Activated CD4-positive, alpha-beta memory T cell treated with anti-CD3 and anti-CD28 coated beads, Interleukin-2, amount 10 ng/mL, durations not matched to agents 7 days and 5 days (primary cell): ENCODE measurements at regions of chr10 and their contacts with region 1.

Region 1: DNA sequence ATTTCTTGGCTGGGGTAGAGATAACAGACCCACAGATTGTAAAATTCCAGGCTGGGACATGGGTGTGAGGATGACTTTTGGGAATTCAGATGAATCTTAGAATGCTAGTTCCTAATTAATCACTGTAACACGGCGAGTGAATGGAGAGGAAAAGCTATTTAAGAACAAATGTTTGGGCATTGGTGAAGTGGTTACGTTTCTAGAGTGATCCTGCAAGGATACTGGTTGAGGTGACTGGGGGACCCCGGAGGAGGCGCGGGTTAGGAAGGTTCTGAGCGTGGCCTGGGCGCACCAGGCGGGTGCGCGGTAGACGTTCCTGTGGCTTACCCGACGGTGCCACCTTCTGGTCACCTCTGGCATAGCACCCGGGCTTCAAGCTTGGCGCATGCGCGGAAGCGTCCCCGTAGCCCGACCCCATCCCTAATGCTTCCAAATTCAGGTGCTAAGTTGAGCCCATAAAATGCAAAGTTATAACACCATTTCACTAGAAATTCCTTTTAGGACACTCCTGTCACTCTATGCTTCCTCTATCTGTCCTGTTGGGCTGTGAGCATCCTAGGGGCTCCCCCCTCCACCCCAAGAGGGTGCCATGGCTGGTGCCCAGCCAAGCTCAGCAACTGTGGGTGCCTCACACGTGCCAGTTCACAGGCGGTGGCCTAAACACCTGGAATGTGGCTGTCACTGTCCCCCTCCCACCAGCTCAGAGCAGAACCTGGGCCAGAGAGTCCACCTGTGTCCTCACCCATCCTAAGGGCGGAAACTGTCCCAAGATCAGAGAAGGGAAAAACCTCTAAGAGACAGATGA is 104.5 kb downstream of the PTPRE start:
- DNase-seq: peak; percentile 87
- H3K4me3 Mint-ChIP-seq: no peak overlapping the region
- H3K27ac Mint-ChIP-seq: no peak overlapping the region
- H3K4me1 Mint-ChIP-seq: peaks cover 12% of the 10 kb centered on the region
- H3K27me3 Mint-ChIP-seq: peaks cover 28% of the 10 kb centered on the region

Region 2: GRCh38 chr10:127570036-127570435 is 441.3 kb before region 1 on chr10:
- CTCF ChIA-PET with region 1: no interaction called
- POLR2A ChIA-PET with region 1: no interaction called
- DNase-seq: no peak
- H3K4me3 Mint-ChIP-seq: no peak overlapping the region
- H3K27ac Mint-ChIP-seq: no peak overlapping the region
- H3K4me1 Mint-ChIP-seq: no peaks in the 10 kb centered on the region
- H3K27me3 Mint-ChIP-seq: no peaks in the 10 kb centered on the region

Region 3: DNA sequence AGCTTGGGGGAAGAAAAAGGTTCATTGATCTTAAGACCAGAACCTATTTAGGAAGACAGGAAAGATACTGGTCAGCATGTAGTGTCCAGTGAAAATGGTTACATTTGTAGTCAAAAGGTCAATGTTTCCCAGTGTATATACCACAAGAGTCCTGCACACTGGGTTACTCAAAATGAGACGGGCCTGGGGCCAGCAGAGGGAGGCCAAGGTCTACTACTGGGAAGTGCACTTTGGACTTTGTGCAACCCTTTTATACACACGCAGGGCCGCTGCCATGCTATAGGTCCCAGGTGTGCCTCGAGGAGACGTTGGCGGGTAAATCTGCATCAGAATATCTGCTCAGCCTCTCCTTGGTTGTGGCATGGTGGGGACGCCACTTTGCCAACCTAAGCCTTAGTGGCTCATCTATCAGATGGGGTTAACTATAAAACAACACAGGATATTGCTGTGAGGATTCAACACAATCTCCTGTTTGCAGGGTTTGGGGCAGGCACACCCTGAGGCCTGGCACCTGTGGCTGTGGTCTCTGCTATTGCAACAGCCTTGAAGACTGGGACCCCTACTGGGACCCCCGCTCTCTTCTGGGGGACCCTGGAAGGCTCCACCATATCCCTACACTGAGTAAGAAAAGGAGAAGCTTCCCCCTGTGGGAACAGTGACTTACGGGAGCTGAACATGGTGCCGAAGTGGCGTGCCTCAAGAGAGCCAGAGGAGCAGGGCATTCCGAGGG is 138.3 kb before region 1 on chr10:
- CTCF ChIA-PET with region 1: interaction called, 11 read pairs
- POLR2A ChIA-PET with region 1: no interaction called
- DNase-seq: no peak
- H3K4me3 Mint-ChIP-seq: no peak overlapping the region
- H3K27ac Mint-ChIP-seq: no peak overlapping the region
- H3K4me1 Mint-ChIP-seq: peaks cover 25% of the 10 kb centered on the region
- H3K27me3 Mint-ChIP-seq: peaks cover 26% of the 10 kb centered on the region

Region 4: DNA sequence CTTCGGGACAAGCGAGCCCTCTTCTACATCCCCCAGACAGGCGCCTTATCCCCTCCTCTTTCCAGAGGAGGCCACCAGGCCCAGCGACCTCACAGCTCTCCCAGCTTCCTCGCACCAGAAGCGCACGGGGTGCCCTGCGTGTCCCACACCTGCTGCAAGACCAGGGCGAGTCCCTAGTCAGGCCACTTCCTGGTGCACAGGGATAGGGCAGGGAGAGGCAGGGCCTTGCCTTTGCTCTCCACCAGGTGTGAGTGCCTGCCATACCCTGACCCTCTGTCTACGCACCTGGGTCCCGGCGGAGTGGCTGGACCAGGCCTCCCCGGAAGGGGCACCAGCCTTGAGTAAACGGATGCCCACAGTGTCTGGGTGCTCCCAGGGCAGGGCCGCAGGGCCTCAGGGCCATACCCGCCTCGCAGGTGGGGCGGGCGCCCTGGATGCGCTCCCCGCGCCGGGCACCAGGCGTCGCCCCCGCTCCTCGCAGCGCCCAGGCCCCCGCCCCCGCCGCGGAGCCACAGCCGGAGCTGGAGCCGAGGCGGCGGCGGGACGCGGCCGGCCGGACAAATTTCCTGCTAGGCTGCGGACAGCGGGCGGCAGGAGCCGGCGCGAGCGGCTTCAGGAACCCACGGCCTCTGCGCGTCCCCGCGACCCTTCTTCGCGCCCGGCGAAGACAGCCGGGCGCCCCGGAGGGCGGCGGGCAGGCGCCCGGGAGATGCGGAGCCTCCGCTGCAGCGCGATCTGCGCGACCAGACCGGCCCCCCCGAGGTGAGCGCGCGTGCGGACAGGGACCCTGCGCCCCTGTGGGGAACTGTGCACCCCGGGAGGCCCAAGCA is 104.6 kb before region 1 on chr10 and contains the start of gene PTPRE:
- CTCF ChIA-PET with region 1: interaction called, 76 read pairs
- POLR2A ChIA-PET with region 1: no interaction called
- DNase-seq: peak; percentile 71
- H3K4me3 Mint-ChIP-seq: peak within 1 kb of the TSS; percentile 14
- H3K27ac Mint-ChIP-seq: no peak within 1 kb of the TSS
- H3K4me1 Mint-ChIP-seq: peaks cover 9% of the 10 kb centered on the region
- H3K27me3 Mint-ChIP-seq: peaks cover 41% of the 10 kb centered on the region
- total RNA-seq, gene PTPRE: 29.2 to 30.6 TPM

Region 5: DNA sequence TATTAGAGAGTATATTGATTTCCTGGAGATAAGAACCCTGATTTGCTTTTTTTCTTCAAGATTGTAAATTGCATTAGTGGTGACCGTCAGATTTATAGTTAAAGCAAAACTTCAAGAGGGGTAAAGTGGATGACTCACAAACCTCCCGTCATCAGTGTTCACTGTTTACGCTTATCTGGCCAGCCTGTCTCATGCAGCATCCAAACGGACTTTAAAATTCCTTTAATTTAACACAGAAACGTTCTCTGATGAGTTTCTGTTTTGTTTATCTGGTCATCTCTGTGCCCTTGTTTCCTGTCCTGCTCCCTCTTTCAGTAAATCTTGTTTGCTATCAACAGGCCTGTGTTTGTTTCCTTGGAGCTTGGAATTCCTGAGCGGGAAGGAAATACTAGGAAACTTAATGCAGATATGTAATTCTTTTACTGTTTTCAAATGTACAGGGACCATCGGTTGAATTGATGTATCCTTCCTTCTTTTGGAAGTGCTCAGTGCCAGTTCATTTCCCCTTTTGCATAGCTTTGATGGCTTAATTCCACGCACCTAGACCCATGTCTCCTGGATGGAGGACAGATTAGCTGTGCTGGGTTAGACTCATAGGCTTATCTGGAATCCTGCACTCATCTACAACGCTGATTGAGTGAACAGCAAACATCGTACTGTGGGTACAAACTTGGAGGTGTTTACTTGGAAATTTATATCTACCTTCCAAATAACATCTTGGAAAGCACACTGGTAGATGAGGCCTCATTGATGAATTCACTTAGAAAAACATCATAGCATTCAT is 83.2 kb before region 1 on chr10:
- CTCF ChIA-PET with region 1: interaction called, 10 read pairs
- POLR2A ChIA-PET with region 1: no interaction called
- DNase-seq: no peak
- H3K4me3 Mint-ChIP-seq: no peak overlapping the region
- H3K27ac Mint-ChIP-seq: no peak overlapping the region
- H3K4me1 Mint-ChIP-seq: peaks cover 6% of the 10 kb centered on the region
- H3K27me3 Mint-ChIP-seq: peaks cover 2% of the 10 kb centered on the region

Region 6: DNA sequence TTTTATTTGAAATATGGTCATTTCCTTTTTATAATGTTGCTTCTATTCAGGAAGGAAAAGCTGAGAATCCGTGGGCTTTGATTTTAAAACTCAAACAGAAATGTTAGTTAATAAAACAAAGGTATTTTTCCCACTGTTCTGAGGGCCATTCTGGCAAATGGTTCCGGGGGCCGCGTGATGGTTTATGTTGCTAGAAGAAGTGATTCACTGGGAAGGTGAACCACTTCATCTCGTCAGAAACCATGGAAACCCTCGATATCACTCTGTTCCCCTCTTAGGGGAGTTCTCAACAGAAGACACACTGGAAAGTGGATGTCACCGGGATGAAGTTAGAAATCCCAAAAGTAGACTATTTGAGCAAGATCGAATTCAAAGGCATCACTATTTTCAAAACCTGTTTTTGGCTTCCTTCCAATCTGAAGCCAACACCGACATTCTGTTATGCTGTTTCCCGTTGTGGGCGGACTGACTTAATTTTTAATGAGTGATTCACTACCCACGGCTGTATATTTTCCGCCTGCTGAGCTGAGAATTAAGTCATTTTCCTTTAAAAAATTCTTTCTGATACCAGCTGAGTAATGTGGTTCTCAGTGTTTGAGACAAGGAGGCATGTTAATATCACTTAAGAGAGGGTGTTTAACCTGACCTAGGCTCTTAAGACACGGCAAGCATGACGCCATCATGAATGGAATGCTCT is 20.4 kb before region 1 on chr10:
- CTCF ChIA-PET with region 1: interaction called, 19 read pairs
- POLR2A ChIA-PET with region 1: interaction called, 4 read pairs
- DNase-seq: peak; percentile 49
- H3K4me3 Mint-ChIP-seq: peak overlapping the region; percentile 37
- H3K27ac Mint-ChIP-seq: peak overlapping the region; percentile 71
- H3K4me1 Mint-ChIP-seq: peaks cover 46% of the 10 kb centered on the region
- H3K27me3 Mint-ChIP-seq: peaks cover 3% of the 10 kb centered on the region

Region 7: DNA sequence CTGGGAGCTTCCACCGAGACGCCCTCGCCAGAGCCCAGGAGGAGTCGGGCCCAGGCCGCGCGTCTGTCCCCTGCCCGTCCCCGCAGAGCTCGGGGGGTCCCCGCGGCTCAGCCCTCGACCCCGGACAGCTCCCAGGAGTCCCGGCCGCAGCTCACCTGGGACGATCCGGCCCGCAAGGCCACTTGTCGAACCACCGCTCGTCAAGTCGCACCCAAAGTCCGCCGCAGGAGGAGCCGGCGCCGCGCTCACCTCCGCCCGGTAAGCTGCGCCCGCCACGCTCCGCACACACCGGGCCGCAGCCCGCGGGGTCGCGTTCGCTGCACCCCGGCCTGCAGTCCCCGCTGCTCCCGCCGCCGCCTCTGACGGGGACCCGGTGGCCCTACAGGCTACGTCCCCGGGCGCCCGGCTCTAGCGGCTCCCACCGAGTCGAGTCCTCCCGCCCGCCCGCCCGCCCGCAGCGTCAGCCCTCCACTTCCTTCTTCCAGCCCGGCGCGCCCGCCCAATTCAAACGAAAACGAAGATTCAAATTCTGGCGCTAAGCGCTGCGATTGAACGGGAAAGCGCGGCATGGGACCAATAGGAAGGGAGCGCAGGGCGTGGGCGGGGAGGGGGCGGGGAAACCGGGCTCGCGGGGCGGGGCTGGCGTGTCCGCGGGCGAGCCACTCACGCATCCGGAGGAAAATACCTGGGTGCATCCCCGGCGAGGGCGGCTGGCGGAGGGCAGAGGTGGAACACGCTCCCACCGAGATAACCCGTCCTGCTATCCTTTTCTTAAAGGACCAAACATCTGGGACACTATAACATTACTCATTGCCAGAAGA is 114.8 kb after region 1 on chr10 and contains the start of gene MKI67:
- CTCF ChIA-PET with region 1: no interaction called
- POLR2A ChIA-PET with region 1: no interaction called
- DNase-seq: peak; percentile 94
- H3K4me3 Mint-ChIP-seq: peak within 1 kb of the TSS; percentile 99
- H3K27ac Mint-ChIP-seq: peak within 1 kb of the TSS; percentile 94
- H3K4me1 Mint-ChIP-seq: peaks cover 40% of the 10 kb centered on the region
- H3K27me3 Mint-ChIP-seq: peaks cover 11% of the 10 kb centered on the region
- total RNA-seq, gene MKI67: 253 to 272 TPM